HEK293 (cell line): ENCODE measurements at regions of chr1 and their contacts with region 1.

Region 1: DNA sequence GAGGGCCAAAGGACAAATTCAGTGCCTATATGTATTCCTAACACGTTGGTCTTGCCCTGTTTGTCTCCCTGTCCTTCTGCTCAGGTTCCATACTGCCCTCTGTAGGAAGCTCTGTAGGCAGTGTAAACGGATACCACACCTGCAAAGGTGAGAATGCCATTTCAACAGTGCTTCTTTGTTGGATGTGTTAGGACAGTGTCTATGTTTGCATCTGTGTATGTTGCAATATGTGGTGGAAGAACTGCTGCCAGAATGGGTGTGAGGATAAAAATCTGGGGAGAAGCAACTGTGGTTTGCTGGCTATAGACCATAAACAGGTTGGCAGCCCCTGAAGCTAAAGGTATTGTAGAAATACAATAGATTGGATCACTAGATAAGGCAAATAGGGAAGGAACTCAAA is 113.1 kb upstream of the BMP8A start:
- H3K4me3 ChIP-seq: no peak overlapping the region
- H3K27ac ChIP-seq: no peak overlapping the region
- H3K4me1 ChIP-seq: no peaks in the 10 kb centered on the region
- CTCF ChIP-seq: peak; percentile 37; the same call in 1 of the 2 replicates

Region 2: DNA sequence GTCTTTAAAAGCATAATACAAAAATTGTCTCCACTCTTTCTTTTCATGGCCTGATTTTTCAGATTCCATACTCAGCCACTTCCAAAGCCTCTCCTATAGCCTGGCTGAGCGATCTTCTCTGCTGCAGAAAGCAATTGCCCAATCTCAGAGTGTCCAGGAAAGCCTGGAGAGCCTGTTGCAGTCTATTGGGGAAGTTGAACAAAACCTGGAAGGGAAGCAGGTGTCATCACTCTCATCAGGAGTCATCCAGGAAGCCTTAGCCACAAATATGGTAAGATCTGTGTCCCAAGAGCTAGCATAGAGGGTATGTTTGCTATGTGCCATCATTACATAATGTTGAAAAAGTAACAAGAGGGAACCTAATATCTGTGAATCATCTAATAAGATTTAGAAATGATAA is 17.6 kb before region 1 on chr1:
- CTCF ChIA-PET with region 1: interaction called, 15 read pairs
- POLR2A ChIA-PET with region 1: no interaction called
- H3K4me3 ChIP-seq: no peak overlapping the region
- H3K27ac ChIP-seq: no peak overlapping the region
- H3K4me1 ChIP-seq: no peaks in the 10 kb centered on the region
- CTCF ChIP-seq: no peak

Region 3: GRCh38 chr1:39368045-39368444 is 10.3 kb before region 1 on chr1:
- CTCF ChIA-PET with region 1: interaction called, 15 read pairs
- POLR2A ChIA-PET with region 1: no interaction called
- H3K4me3 ChIP-seq: no peak overlapping the region
- H3K27ac ChIP-seq: no peak overlapping the region
- H3K4me1 ChIP-seq: no peaks in the 10 kb centered on the region
- CTCF ChIP-seq: no peak

Region 4: DNA sequence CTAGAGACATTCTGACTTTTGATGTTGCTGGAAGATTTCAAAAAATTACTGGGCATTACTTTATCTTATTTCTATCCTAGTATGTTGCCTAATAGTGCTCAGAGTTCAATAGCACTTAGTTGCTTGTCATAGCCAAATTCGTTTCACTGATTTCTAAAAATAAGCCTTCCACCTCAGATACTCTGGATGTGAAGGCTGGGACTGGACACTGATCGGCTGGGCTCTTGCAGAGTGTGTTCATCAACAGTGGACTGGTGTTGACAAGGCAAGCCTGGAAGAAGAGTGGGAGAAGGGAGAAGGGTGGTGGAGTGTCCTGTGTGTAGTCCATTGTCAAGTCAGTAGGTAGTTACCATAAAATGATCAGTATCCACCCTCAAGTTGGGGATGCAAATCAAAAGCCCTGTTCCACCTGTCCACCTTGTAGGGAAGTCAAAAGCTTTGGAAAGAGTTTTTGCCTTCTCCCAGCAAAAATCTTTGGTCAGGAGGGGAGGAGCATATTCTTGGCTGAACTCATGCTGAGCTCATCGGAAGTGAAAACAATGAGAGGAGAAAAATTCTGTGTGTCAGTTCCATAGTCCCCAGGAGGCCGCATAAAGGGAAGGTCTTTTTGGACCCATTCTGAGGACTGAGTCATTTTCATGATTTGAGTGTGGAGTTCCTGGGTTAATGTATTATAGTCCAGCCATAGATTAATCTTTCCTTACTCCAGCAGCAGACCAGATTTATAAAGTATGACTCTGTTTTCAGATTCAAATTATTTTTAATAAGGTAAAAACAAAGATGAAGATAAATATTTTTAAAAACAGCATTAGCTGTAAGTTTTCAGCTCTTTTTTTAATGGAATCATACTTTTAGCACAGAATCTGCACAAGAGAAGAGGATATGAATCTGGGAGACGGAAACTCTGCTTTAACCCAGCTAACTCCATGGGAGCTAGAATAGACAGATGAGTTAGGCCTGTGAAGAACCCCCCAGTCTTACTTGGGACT is 13.6 kb after region 1 on chr1:
- CTCF ChIA-PET with region 1: interaction called, 13 read pairs
- POLR2A ChIA-PET with region 1: no interaction called
- H3K4me3 ChIP-seq: no peak overlapping the region
- H3K27ac ChIP-seq: no peak overlapping the region
- H3K4me1 ChIP-seq: peaks cover 6% of the 10 kb centered on the region; the same call in 1 of the 2 replicates
- CTCF ChIP-seq: no peak

Region 5: DNA sequence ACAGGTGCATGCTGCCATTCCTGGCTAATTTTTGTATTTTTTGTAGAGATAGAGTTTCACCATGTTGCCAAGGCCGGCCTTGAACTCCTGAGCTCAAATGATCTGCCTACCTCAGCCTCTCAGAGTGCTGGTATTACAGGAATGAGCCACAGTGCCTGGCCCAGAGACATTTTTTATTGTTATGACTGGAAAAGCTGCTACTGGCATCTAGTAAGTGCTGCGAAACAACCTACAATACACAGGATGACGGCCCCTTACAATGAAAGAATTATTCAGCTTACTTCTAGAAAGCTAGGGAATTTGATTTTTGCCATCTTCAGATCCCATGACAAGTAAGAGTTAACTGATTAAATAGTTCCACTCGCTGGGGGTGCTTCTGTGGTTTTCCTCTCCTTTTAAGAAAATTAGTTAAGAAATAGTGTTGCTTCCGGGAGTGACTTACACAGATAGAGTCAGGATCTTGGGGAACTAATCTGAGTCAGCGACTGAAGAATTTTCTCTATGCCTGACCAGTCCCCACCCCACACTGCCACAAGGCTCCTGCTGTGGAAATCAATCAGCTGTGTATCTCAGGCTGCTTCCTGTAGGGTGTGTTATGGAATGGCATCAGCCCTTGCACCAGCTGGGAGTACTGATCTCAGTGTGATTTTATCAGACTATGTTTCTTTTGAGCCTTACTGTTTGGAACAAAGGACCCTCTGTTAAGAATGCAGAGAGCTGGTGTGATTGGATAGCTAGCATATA is 20.1 kb after region 1 on chr1:
- CTCF ChIA-PET with region 1: interaction called, 18 read pairs
- POLR2A ChIA-PET with region 1: no interaction called
- H3K4me3 ChIP-seq: no peak overlapping the region
- H3K27ac ChIP-seq: no peak overlapping the region
- H3K4me1 ChIP-seq: peaks cover 9% of the 10 kb centered on the region; the same call in 1 of the 2 replicates
- CTCF ChIP-seq: no peak

Region 6: GRCh38 chr1:39434797-39435395 is 56.5 kb after region 1 on chr1:
- CTCF ChIA-PET with region 1: no interaction called
- POLR2A ChIA-PET with region 1: no interaction called
- H3K4me3 ChIP-seq: no peak overlapping the region
- H3K27ac ChIP-seq: no peak overlapping the region
- H3K4me1 ChIP-seq: no peaks in the 10 kb centered on the region
- CTCF ChIP-seq: no peak